ENCODE measurements at regions of chr19 and their contacts with region 1.

Region 1: GRCh38 chr19:4267101-4267900 is 11.8 kb upstream of the SHD start:
- DNase-seq: peak; percentile 75
- ATAC-seq: peak; percentile 69
- H3K4me3 Mint-ChIP-seq: no peak overlapping the region
- H3K27ac Mint-ChIP-seq: peak overlapping the region; percentile 35
- H3K4me1 Mint-ChIP-seq: peaks cover 36% of the 10 kb centered on the region
- H3K27me3 Mint-ChIP-seq: no peaks in the 10 kb centered on the region

Region 2: GRCh38 chr19:4246767-4247593 is 20.3 kb before region 1 on chr19 and contains the start of gene YJU2:
- CTCF ChIA-PET with region 1: interaction called, 12 read pairs
- DNase-seq: peak; percentile 99
- ATAC-seq: peak; percentile 98
- H3K4me3 Mint-ChIP-seq: peak within 1 kb of the TSS; percentile 85
- H3K27ac Mint-ChIP-seq: peak within 1 kb of the TSS; percentile 97
- H3K4me1 Mint-ChIP-seq: peaks cover 21% of the 10 kb centered on the region
- H3K27me3 Mint-ChIP-seq: no peaks in the 10 kb centered on the region
- total RNA-seq, gene YJU2: 26.8 to 32.1 TPM

Region 3: GRCh38 chr19:4297901-4298809 is 30.9 kb after region 1 on chr19:
- CTCF ChIA-PET with region 1: interaction called, 11 read pairs
- DNase-seq: peak; percentile 82
- ATAC-seq: peak; percentile 84
- H3K4me3 Mint-ChIP-seq: peak overlapping the region; percentile 46
- H3K27ac Mint-ChIP-seq: peak overlapping the region; percentile 78
- H3K4me1 Mint-ChIP-seq: peaks cover 36% of the 10 kb centered on the region
- H3K27me3 Mint-ChIP-seq: no peaks in the 10 kb centered on the region

Region 4: DNA sequence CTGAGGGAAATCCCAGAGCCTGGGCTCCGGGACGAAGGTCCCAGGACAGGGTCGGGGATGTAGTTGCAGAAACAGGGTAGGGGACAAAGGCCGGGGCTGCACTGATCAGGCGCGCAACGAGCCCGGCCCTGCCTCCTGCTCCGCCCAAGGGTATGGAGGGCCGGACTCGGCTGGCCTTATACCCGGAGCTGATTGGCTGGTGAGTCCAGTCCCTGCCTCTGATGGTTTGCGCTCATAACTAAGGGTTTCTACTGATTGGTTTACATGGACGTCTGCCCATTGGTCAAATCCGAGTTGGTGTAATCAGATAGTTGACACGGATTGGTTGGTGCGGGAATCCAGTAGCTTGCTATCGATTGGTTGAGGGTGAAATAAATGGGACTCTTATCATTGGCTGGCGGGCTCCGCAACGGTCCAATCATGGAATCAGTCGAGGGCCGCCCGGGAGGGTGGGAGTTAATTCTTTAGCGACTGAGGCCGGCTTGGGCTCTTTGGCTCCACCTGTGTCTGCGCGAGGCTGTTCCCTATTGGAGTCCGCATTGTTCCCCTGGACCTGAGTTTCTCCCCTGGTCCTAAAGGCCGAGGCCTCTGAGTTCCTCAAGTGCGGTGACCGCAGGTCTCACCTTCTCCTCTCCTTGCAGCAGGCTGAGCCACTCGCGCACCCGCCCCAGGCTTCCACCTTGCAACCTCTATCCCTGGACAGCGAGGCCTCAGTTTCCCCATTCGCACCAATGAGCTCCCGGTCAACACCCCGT is 75.5 kb after region 1 on chr19:
- CTCF ChIA-PET with region 1: interaction called, 53 read pairs
- DNase-seq: peak; percentile 97
- ATAC-seq: peak; percentile 89
- H3K4me3 Mint-ChIP-seq: peak overlapping the region; percentile 85
- H3K27ac Mint-ChIP-seq: peak overlapping the region; percentile 92
- H3K4me1 Mint-ChIP-seq: peaks cover 32% of the 10 kb centered on the region
- H3K27me3 Mint-ChIP-seq: no peaks in the 10 kb centered on the region

Region 5: DNA sequence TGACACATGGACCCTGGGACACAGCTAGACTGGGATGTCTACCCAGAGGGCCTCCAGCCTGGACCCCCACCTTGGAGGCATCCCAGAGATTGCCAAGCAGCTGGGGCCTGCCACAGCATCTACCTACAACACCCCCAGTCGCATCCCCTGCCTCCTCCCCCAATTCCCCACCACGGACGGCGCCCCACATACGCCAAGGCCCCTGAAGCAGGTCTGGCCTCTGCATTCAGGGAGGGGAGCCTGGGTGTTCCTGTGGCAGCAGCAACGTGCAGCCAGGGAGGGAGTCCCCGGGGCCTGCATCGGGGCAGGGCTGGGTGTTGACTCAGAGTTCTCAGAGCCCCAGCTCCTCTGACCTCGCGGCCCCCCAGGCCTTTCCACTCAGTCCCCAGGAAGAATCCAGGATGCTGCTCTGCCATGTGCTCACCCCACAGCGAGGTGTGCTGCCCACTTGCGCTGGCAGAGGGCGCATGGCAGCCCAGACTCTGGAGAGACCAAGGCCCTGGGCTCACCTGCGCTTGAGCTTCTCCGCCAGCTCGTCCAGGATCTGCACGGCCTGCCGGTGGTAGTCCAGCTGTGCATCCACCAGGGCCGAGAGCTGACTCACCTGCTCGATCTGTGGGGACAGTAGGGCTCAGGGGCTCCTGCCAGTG is 95.7 kb after region 1 on chr19:
- CTCF ChIA-PET with region 1: interaction called, 12 read pairs
- DNase-seq: no peak
- ATAC-seq: peak; percentile 26
- H3K4me3 Mint-ChIP-seq: no peak overlapping the region
- H3K27ac Mint-ChIP-seq: no peak overlapping the region
- H3K4me1 Mint-ChIP-seq: peaks cover 5% of the 10 kb centered on the region
- H3K27me3 Mint-ChIP-seq: no peaks in the 10 kb centered on the region

Region 6: GRCh38 chr19:4400135-4400936 is 133.0 kb after region 1 on chr19 and contains the start of gene SH3GL1:
- CTCF ChIA-PET with region 1: interaction called, 27 read pairs
- DNase-seq: peak; percentile 94
- ATAC-seq: peak; percentile 67
- H3K4me3 Mint-ChIP-seq: peak within 1 kb of the TSS; percentile 97
- H3K27ac Mint-ChIP-seq: peak within 1 kb of the TSS; percentile 97
- H3K4me1 Mint-ChIP-seq: peaks cover 58% of the 10 kb centered on the region
- H3K27me3 Mint-ChIP-seq: no peaks in the 10 kb centered on the region
- total RNA-seq, gene SH3GL1: 43.3 to 57.7 TPM

Region 7: GRCh38 chr19:4505897-4506744 is 238.8 kb after region 1 on chr19:
- CTCF ChIA-PET with region 1: no interaction called
- DNase-seq: peak; percentile 49
- ATAC-seq: peak; percentile 54
- H3K4me3 Mint-ChIP-seq: no peak overlapping the region
- H3K27ac Mint-ChIP-seq: peak overlapping the region; percentile 65
- H3K4me1 Mint-ChIP-seq: peaks cover 11% of the 10 kb centered on the region
- H3K27me3 Mint-ChIP-seq: no peaks in the 10 kb centered on the region